ENCODE measurements at regions of chr4 and their contacts with region 1.

Region 1: DNA sequence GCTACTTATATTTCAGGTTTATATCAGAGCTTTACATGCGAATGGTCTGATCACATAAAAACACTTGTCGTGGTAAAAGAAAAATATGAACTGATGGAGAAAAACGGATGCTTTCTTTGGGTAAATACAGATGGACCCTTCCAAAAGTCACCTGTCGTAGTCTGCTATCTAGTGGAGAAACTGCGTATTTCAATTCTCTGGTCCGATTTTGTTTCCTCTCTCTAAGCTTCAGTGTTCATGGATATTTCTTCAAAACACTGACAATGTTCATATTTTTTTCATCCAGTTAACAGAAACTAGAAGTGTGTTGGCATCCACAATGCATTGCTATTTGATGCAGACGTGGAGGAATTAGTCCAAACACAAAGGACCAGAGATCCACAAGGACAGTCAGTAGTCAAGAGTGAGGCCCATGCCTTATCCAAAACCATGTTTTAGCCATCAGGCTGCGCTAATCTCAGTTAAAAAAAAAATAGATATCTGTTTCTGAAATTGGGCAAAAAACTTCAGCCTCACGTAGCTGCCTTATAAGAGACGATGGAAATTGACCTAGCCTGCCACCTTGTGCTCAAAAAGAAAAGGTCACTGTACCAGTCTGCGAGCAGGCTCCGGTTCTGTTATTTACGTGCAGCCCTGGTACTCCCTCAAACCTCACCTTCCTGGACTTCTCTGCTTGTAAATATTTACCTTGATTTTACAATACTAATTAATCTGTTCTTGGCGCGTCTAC is 16.0 kb downstream of the MEPE start:
- DNase-seq: peak; percentile 6
- H3K4me3 Mint-ChIP-seq: no peak overlapping the region
- H3K27ac Mint-ChIP-seq: no peak overlapping the region
- H3K4me1 Mint-ChIP-seq: peaks cover 13% of the 10 kb centered on the region
- H3K27me3 Mint-ChIP-seq: peaks cover 22% of the 10 kb centered on the region

Region 2: DNA sequence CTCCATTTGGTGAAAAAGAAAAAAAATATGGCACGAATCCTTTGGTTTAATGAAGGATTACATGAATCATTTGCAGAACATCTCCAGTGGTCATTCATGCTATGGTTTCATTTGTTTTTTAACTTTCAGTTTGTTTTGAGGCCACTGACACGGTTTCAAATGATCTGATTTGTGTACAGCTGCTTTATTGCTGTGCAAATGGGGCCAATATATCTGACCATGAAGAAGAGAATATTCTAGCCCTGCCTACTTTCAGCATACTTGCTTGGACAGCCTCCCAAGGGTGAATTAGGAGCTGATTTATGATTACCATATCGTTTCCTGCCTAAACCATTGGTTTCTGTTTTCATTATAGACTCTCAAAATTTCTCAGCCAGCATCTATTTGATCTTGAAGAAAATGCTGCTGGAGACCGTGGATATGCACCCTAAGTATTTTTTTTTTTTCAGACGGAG is 350.3 kb before region 1 on chr4:
- intact Hi-C with region 1: loop called (anchors 10 kb)
- DNase-seq: no peak
- H3K4me3 Mint-ChIP-seq: no peak overlapping the region
- H3K27ac Mint-ChIP-seq: no peak overlapping the region
- H3K4me1 Mint-ChIP-seq: peaks cover 5% of the 10 kb centered on the region
- H3K27me3 Mint-ChIP-seq: no peaks in the 10 kb centered on the region

Region 3: DNA sequence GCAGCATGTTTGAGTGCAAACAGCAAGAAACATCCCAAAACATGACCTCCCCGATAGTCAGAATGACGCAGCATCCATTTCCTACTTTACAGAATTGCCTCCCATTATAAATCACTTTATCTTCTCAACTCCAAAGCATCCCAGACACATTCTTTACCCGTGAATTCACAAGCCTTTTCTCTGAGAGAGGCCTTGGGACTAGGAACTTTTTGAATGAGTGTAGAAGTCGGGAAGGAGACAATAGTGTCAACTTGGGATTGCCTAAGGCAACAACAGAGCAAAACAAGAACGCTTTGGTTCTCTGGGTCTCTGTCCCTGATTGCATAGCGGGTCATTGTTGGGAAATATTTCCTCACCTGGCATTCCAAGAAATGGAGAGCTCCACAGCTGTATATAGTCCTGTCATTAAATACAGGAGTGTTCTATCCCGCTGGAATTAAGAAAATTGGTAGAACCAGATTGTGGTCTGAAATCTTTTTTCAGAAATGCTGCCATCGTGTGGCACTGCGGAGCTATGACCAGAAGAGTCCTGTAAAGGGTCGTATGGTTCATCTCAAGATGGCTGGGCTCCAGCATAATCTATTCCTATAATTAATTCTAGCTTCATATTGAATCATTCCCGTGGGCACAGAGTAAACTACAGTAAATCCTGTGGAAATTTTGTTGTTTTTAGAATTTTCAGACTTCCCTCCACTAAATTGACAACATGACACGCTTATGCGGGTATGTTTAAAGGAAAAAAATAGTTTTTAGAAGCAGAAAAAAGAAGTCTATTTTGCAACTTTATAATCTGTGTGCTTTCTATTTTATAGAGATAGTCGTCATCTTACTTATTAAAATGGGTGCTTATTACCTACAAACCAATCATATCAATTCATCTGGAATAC is 124.7 kb after region 1 on chr4:
- intact Hi-C with region 1: loop called (anchors 1 kb)
- DNase-seq: no peak
- H3K4me3 Mint-ChIP-seq: no peak overlapping the region
- H3K27ac Mint-ChIP-seq: no peak overlapping the region
- H3K4me1 Mint-ChIP-seq: peaks cover 15% of the 10 kb centered on the region
- H3K27me3 Mint-ChIP-seq: peaks cover 53% of the 10 kb centered on the region

Region 4: DNA sequence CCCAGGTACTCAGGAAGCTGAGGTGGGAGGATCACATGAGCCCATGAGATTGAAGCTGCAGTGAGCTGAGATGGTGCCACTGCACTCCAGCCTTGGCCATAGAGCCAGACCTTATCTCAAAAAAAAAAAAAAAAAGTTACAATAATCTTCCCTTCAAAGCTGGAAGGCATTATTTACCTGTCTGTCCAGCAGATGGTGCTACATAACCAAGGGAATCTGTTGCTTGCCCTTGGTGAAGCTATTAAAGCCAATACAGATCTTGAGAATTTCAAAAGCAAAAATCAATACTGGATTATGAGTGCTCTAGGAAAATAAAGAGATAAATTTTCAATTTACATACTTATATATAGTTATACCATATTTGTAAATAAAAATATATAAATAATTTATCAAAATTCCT is 184.5 kb after region 1 on chr4:
- intact Hi-C with region 1: loop called (anchors 2 kb)
- DNase-seq: peak; percentile 29
- H3K4me3 Mint-ChIP-seq: no peak overlapping the region
- H3K27ac Mint-ChIP-seq: no peak overlapping the region
- H3K4me1 Mint-ChIP-seq: peaks cover 2% of the 10 kb centered on the region
- H3K27me3 Mint-ChIP-seq: no peaks in the 10 kb centered on the region

Region 5: GRCh38 chr4:88054901-88055300 is 206.1 kb after region 1 on chr4:
- intact Hi-C with region 1: no loop called
- DNase-seq: no peak
- H3K4me3 Mint-ChIP-seq: no peak overlapping the region
- H3K27ac Mint-ChIP-seq: no peak overlapping the region
- H3K4me1 Mint-ChIP-seq: no peaks in the 10 kb centered on the region
- H3K27me3 Mint-ChIP-seq: no peaks in the 10 kb centered on the region

Region 6: DNA sequence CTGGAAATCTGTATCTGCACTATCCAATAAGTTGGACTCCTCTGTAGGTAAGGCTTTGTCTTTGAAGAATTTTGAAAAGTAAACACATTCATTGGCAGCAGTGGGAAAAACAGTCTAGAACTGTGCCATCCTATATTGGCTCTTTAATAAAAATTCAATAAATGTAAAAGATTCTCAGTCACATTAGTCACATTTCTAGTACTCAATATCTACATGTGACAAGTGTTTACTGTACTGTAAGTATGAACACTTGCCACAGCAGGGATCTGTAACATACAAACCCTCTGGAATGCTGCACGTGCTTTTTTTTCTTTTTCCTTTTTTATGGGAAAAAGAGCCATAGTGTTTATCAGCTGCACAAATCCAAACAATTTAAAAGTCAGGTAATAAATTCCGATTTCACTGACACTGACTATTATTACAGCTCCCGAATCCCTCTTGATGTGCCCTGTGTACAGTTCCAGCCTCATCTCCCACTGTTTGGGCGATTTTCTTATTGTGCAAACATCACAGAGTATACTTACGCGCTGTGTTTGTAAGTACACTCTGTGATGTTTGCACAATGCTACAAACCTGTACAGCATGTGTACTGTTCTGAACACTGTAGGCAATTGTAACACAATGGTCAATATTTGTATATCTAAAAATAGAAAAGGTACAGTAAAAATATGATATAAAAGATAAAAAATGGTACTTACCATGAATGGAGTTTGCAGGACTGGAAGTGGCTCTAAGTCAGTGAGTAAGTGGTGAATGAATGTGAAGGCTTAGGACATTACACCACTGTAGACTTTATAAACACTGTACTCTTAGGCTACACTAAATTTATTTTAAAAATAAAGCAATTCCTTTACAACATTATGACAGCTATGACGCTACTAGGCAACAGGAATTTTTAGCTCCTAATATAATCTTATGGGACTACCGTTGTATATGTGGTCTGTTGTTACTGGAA is 666.0 kb after region 1 on chr4:
- intact Hi-C with region 1: loop called (anchors 5 kb)
- DNase-seq: no peak
- H3K4me3 Mint-ChIP-seq: no peak overlapping the region
- H3K27ac Mint-ChIP-seq: no peak overlapping the region
- H3K4me1 Mint-ChIP-seq: no peaks in the 10 kb centered on the region
- H3K27me3 Mint-ChIP-seq: no peaks in the 10 kb centered on the region